ENCODE measurements at regions of chr11 and their contacts with region 1.

Region 1: DNA sequence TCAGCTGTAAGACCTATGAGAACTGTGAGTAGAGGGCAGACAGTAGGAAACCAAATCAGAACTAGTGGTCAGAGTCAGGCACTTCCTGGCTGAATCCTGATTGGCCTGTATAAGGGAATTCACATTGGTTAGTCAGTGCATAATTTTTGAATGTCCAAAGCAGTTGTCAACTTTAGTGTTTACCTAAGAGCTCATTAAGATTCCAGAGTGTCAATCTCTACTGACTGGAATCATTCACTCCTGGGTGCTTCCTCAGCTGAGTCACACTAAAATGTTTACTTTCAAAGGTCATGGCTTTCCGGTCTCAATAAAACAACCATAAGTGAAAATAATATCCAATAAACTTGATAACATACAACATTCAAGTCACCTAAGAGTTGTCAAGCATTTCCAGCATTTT is 306.1 kb downstream of the C11orf87 start:
- DNase-seq: peak; percentile 7
- H3K4me3 Mint-ChIP-seq: no peak overlapping the region
- H3K27ac Mint-ChIP-seq: no peak overlapping the region
- H3K4me1 Mint-ChIP-seq: peaks cover 27% of the 10 kb centered on the region
- H3K27me3 Mint-ChIP-seq: no peaks in the 10 kb centered on the region
- CTCF ChIP-seq: no peak

Region 2: GRCh38 chr11:109853156-109853776 is 125.2 kb after region 1 on chr11:
- CTCF ChIA-PET with region 1: interaction called, 4 read pairs
- intact Hi-C with region 1: loop called (anchors 2 kb)
- DNase-seq: peak; percentile 34
- H3K4me3 Mint-ChIP-seq: no peak overlapping the region
- H3K27ac Mint-ChIP-seq: no peak overlapping the region
- H3K4me1 Mint-ChIP-seq: peaks cover 6% of the 10 kb centered on the region
- H3K27me3 Mint-ChIP-seq: no peaks in the 10 kb centered on the region
- CTCF ChIP-seq: peak; percentile 23

Region 3: GRCh38 chr11:109864834-109865547 is 136.9 kb after region 1 on chr11:
- CTCF ChIA-PET with region 1: no interaction called
- intact Hi-C with region 1: no loop called
- DNase-seq: no peak
- H3K4me3 Mint-ChIP-seq: no peak overlapping the region
- H3K27ac Mint-ChIP-seq: no peak overlapping the region
- H3K4me1 Mint-ChIP-seq: no peaks in the 10 kb centered on the region
- H3K27me3 Mint-ChIP-seq: no peaks in the 10 kb centered on the region
- CTCF ChIP-seq: no peak